OCI-LY7 (cell line): ENCODE measurements at regions of chr7 and their contacts with region 1.

Region 1: DNA sequence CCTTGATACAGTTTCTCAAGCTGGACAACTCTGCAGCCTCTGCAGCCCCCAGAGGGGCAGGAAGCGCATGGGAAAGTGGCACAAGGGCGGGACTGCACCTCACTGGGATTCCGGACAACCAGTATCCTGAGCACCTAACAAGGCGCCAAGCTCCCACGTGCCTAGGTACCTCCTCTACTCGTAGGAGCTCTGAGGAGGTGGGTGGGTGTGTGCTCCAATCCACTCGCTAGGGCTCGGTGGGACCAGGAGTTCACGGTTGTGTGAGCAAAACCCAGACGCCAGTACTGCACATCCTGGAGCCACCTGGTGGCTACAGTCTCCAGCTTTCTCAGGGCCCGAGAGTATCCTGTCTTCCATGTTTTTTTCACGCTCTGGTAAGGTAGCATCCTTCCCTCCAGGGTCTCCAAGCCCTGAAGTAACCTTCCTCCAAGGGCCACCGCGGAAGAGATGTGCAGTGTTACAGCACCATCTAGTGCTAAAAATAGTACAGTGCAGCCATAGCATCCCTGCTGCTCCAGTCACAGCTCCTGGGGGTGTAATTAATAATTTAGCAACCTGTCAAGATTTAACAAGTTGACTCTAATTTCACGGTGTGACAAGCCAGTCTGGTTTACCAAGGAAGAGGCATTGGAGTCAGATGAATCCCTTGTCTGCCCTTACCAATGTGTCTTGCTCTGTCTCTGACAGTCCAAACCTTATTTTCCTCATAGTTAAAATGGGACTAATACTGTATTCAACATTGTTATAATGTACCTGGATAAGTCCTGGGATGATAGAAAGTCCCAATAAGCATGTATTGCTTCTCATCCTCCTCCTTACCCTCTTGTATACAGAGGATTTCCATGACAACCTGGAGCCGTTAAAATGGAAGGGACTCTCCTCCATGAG is 70.4 kb downstream of the HERPUD2 start:
- DNase-seq: peak; percentile 62
- H3K4me3 ChIP-seq: no peak overlapping the region
- H3K27ac ChIP-seq: no peak overlapping the region
- H3K4me1 ChIP-seq: no peaks in the 10 kb centered on the region
- CTCF ChIP-seq: peak; percentile 93

Region 2: GRCh38 chr7:35537067-35538023 is 87.2 kb before region 1 on chr7:
- CTCF ChIA-PET with region 1: no interaction called
- POLR2A ChIA-PET with region 1: no interaction called
- intact Hi-C with region 1: loop called (anchors 5 kb)
- DNase-seq: peak; percentile 77
- H3K4me3 ChIP-seq: peak overlapping the region; percentile 54
- H3K27ac ChIP-seq: no peak overlapping the region
- H3K4me1 ChIP-seq: no peaks in the 10 kb centered on the region
- CTCF ChIP-seq: peak; percentile 89

Region 3: GRCh38 chr7:35802649-35803048 is 178.1 kb after region 1 on chr7:
- CTCF ChIA-PET with region 1: no interaction called
- POLR2A ChIA-PET with region 1: no interaction called
- intact Hi-C with region 1: no loop called
- DNase-seq: peak; percentile 44
- H3K4me3 ChIP-seq: peak overlapping the region; percentile 89
- H3K27ac ChIP-seq: peak overlapping the region; percentile 90
- H3K4me1 ChIP-seq: peaks cover 47% of the 10 kb centered on the region
- CTCF ChIP-seq: no peak